Ascending aorta (tissue), 2 donors: ENCODE measurements at regions of chr3 and their contacts with region 1.

Region 1: GRCh38 chr3:149180057-149180573 is 41.5 kb downstream of the CP start:
- DNase-seq: peak; percentile 78 to 95
- H3K4me3 ChIP-seq: no peak overlapping the region
- H3K27ac ChIP-seq: peak overlapping the region; percentile 35 to 64
- H3K4me1 ChIP-seq: peaks cover 0 to 15% of the 10 kb centered on the region in 2 donors
- H3K27me3 ChIP-seq: no peaks in the 10 kb centered on the region
- CTCF ChIP-seq: no peak

Region 2: GRCh38 chr3:149245738-149246451 is 65.8 kb after region 1 on chr3:
- intact Hi-C with region 1: loop called (anchors 5 kb)
- DNase-seq: no peak
- H3K4me3 ChIP-seq: peak overlapping the region in 1 of 2 donors; percentile 23
- H3K27ac ChIP-seq: peak overlapping the region; percentile 64 to 70
- H3K4me1 ChIP-seq: peaks cover 9 to 32% of the 10 kb centered on the region in 2 donors
- H3K27me3 ChIP-seq: no peaks in the 10 kb centered on the region
- CTCF ChIP-seq: no peak

Region 3: GRCh38 chr3:149377408-149378377 is 197.6 kb after region 1 on chr3 and contains the start of gene TM4SF1:
- intact Hi-C with region 1: no loop called
- DNase-seq: peak; percentile 30 to 92
- H3K4me3 ChIP-seq: peak within 1 kb of the TSS; percentile 46 to 66
- H3K27ac ChIP-seq: peak within 1 kb of the TSS; percentile 74 to 83
- H3K4me1 ChIP-seq: peaks cover 14 to 40% of the 10 kb centered on the region in 2 donors
- H3K27me3 ChIP-seq: no peaks in the 10 kb centered on the region
- CTCF ChIP-seq: no peak
- total RNA-seq, gene TM4SF1: 487 TPM